ENCODE measurements at regions of chr9 and their contacts with region 1.

Region 1: GRCh38 chr9:68507130-68507805 is 33.4 kb downstream of the TMEM252 start:
- DNase-seq: no peak
- ATAC-seq: peak; percentile 59
- H3K4me3 ChIP-seq: no peak overlapping the region
- H3K27ac ChIP-seq: peak overlapping the region; percentile 70 to 85
- H3K4me1 ChIP-seq: peaks cover 3% of the 10 kb centered on the region in 2 donors
- H3K27me3 ChIP-seq: no peaks in the 10 kb centered on the region

Region 2: DNA sequence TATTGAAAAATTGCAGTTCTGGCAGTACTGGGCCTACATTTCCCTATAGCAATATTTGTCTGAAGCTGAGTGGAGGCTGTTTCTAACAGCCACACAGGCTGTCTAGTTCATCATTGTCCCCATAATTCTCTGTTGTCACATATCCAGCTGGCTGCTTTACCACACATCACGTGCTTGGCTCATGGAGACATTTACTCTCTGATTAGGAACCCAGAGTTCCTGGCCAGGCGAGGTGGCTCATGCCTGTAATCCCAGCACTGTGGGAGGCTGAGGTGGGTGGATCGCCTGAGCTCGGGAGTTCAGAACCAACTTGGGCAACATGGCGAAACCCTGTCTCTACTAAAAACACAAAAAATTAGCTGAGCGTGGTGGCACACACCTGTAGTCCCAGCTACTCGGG is 69.5 kb before region 1 on chr9:
- intact Hi-C with region 1: loop called in 1 of 2 experiments (anchors 10 kb)
- DNase-seq: peak; percentile 63 to 75
- ATAC-seq: peak; percentile 84
- H3K4me3 ChIP-seq: no peak overlapping the region
- H3K27ac ChIP-seq: peak overlapping the region in 1 of 2 donors; percentile 25
- H3K4me1 ChIP-seq: peaks cover 3% of the 10 kb centered on the region in 2 donors
- H3K27me3 ChIP-seq: no peaks in the 10 kb centered on the region

Region 3: GRCh38 chr9:68560071-68560844 is 53.0 kb after region 1 on chr9:
- intact Hi-C with region 1: loop called (anchors 5 to 10 kb)
- DNase-seq: peak in 1 of 2 donors; percentile 61
- ATAC-seq: peak; percentile 76
- H3K4me3 ChIP-seq: no peak overlapping the region
- H3K27ac ChIP-seq: no peak overlapping the region
- H3K4me1 ChIP-seq: no peaks in the 10 kb centered on the region
- H3K27me3 ChIP-seq: no peaks in the 10 kb centered on the region

Region 4: DNA sequence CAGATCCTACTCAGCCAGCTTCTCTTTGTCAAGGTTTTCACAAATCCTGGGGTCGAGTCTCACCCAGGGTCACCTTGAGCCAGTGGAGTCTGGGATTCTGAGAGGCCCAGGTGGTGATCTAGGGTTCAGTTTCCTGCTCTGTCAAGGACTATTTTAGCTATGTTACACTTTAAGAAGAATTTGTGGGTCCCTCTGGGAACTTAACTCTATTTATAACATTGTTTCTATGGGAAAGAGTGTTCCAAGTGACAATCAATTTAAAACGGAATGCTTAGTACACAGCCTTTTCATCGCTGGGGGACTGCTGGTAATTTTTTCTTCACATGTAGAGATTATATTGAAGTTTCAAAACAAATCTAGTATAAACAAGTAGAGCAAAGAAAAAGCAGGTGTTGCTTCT is 60.3 kb after region 1 on chr9:
- intact Hi-C with region 1: loop called (anchors 5 to 10 kb)
- DNase-seq: no peak
- ATAC-seq: peak; percentile 36
- H3K4me3 ChIP-seq: no peak overlapping the region
- H3K27ac ChIP-seq: peak overlapping the region in 1 of 2 donors; percentile 0
- H3K4me1 ChIP-seq: peaks cover 2 to 4% of the 10 kb centered on the region in 2 donors
- H3K27me3 ChIP-seq: no peaks in the 10 kb centered on the region

Measured in aorta (tissue), 5 donors.